Left lung (tissue), 14 donors: ENCODE measurements at regions of chr1 and their contacts with region 1.

Region 1: DNA sequence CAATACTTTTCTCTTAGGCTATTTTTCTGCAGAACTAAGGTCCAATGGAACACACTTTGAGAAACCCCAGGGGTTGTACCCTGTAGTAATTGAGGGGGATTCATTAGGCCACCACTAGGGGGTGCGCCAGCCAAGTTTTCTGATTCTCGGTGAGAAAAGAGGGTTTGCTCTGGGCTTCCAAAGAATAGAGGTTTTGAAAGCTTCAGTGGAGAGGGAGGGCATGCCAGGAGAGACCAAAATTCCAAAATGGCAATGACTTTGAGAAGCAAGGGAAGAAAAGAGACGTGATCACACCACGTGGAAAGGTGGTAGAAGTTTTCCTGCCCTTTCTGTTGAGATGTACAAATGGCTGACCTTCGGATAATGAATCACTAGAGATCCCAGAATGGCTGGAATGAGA is 323.3 kb downstream of the RPS6KC1 start:
- DNase-seq: peak in 3 of 4 donors; percentile 46 to 72 (median 51)
- ATAC-seq: peak; percentile 85
- H3K4me3 ChIP-seq: no peak overlapping the region
- H3K27ac ChIP-seq: no peak overlapping the region
- H3K4me1 ChIP-seq: no peaks in the 10 kb centered on the region
- H3K27me3 ChIP-seq: no peaks in the 10 kb centered on the region
- CTCF ChIP-seq: peak; percentile 69 to 89

Region 2: DNA sequence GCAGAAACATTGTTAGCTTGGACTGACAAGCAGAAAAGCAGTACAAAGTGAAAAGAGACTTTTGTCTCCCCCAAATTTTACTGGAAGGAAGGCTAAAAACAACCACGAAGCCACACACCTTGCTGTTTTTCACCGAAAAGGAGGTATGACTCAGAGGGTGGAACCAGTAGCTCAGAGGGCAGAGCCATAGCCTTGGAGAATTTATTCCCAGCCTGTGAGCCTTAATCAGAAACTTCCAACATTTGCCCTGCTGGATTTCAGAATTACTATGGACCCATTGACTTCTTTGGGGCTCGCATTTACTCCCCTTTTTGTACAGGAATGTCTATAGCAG is 291.3 kb before region 1 on chr1:
- intact Hi-C with region 1: no loop called
- DNase-seq: no peak
- ATAC-seq: no peak
- H3K4me3 ChIP-seq: no peak overlapping the region
- H3K27ac ChIP-seq: no peak overlapping the region
- H3K4me1 ChIP-seq: no peaks in the 10 kb centered on the region
- H3K27me3 ChIP-seq: no peaks in the 10 kb centered on the region
- CTCF ChIP-seq: no peak

Region 3: DNA sequence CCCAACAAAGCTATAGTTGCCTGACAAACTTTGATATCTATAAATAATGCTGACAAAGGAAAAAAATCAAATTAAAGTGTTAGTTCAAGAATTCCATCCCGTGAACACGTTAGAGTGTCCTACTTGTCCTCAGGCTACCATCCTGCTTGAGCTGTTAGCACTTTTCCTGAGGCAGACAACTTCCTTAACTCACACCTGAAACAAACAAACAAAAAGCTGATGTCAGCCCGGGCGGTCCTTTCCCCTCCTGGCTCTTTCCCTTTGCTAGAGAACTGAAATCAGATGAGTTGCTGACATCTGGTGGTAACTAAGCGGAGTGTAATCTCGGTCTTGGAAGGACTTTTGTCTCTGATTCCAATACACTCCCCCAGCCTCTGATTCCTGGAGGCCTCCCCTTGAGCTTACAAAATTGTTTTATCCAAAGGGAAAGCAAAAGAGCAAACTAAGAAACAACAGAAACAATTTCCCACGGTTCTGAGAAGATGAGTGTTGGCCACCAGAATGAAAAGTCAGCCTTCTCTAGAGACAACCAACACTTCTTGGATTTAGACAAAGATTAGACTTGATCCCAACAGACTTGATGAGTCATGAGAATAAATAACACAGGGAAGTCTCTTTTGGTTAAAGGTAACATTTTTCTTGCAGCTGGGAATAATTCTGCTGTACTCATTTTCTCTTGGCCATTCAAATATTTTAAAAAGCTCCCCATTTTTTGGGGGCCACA is 748.9 kb after region 1 on chr1:
- intact Hi-C with region 1: loop called in 1 of 2 experiments (anchors 10 kb)
- DNase-seq: peak in 3 of 4 donors; percentile 39 to 80 (median 65)
- ATAC-seq: peak; percentile 95
- H3K4me3 ChIP-seq: no peak overlapping the region
- H3K27ac ChIP-seq: no peak overlapping the region
- H3K4me1 ChIP-seq: no peaks in the 10 kb centered on the region
- H3K27me3 ChIP-seq: no peaks in the 10 kb centered on the region
- CTCF ChIP-seq: peak in 1 of 2 donors; percentile 27